A673 (cell line): ENCODE measurements at regions of chr3 and their contacts with region 1.

Region 1: GRCh38 chr3:170811928-170812591 is 57.9 kb downstream of the RPL22L1 start:
- DNase-seq: peak; percentile 86
- H3K4me3 ChIP-seq: no peak overlapping the region
- H3K27ac ChIP-seq: no peak overlapping the region
- H3K4me1 ChIP-seq: peaks cover 4% of the 10 kb centered on the region
- H3K27me3 ChIP-seq: no peaks in the 10 kb centered on the region
- CTCF ChIP-seq: peak; percentile 97

Region 2: GRCh38 chr3:169764452-169765274 is 1047.4 kb before region 1 on chr3 and contains the start of gene TERC:
- CTCF ChIA-PET with region 1: no interaction called
- POLR2A ChIA-PET with region 1: no interaction called
- intact Hi-C with region 1: loop called (anchors 10 kb)
- DNase-seq: peak; percentile 92
- H3K4me3 ChIP-seq: peak within 1 kb of the TSS; percentile 73
- H3K27ac ChIP-seq: peak within 1 kb of the TSS; percentile 90
- H3K4me1 ChIP-seq: no peaks in the 10 kb centered on the region
- H3K27me3 ChIP-seq: no peaks in the 10 kb centered on the region
- CTCF ChIP-seq: no peak
- total RNA-seq, gene TERC: 5.8 and 16.7 TPM in 2 replicates

Region 3: DNA sequence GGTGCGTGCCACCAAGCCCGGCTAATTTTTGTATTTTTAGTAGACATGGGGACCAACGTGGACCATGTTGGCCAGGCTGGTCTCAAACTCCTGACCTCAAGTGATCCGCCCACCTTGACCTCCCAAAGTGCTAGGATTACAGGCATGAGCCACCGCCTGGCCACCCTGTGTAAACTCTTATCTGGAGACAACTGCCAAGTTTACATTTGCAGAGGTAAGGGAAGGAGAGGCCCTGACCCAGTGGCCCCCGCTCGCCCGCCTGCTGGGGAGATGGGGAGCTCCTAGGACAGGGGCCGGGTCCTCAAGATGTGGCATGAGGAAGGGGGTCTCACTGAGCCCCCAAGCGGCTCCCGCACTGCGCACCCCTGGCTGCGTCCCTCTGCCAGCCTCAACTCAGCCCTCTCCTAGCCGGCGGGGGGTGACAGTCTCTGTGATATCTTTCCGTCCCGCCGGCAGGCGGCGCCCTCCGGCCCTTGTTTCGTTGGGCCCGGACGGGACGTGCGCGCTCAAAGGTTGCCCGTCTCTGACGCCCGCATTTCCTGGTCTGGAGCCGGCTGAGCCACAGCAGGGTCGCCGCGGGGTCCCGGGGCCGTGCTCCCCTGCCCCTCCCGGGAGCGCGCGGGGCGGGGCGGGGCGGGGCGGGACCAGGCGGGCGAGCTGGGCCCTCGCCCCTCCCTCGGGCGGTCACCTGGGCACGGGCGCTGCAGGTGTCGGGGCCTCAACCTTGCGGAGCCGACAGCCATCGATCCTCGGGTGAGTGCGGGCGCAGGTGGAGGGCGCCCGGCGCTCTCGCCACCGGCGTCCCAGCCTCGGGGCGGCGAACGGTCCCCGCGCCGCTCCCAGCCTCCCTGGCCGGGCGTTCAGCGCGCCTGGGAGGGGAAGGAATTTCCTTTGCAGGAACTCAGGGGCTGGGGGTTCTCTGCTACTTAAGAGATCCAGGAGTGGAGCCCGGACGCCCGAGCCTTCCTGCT is 774.3 kb before region 1 on chr3 and contains the start of gene GPR160:
- CTCF ChIA-PET with region 1: interaction called, 3 read pairs
- POLR2A ChIA-PET with region 1: no interaction called
- intact Hi-C with region 1: loop called (anchors 10 kb)
- DNase-seq: peak; percentile 84
- H3K4me3 ChIP-seq: peak within 1 kb of the TSS; percentile 79
- H3K27ac ChIP-seq: peak within 1 kb of the TSS; percentile 11
- H3K4me1 ChIP-seq: no peaks in the 10 kb centered on the region
- H3K27me3 ChIP-seq: no peaks in the 10 kb centered on the region
- CTCF ChIP-seq: peak; percentile 82
- total RNA-seq, gene GPR160: 6.7 and 11.2 TPM in 2 replicates

Region 4: DNA sequence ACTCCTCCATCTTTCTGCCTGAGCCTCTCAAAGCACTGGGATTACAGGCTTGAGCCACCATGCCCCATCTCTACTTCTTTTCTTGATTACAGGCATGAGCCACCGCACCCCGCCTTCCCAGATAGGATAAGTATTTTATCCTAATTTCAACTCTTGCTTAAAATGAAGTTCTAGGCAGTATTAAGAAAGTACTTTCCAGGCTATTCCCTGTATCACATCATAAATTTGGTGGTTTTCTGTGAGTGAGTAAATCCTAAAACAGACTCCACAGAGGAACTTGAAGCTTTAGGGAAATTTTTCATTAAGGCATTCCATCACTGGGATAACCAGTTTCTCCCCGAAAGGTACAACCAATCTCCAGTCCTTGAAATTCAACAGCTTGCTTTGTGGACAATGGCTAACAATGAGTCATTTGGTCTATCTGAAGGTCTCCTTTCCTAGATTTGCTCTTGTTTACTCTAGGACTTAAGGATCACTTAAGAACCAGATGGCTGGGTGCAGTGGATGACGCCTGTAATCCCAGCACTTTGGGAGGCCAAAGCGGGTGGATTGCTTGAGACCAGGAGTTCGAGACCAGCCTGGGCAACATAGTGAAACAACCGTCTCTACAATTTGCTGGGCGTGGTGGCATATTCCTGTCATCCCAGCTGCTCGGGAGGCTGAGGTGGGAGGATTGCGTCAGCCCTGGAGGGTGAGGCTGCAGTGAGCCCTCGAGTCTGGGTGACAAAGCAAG is 504.2 kb before region 1 on chr3:
- CTCF ChIA-PET with region 1: no interaction called
- POLR2A ChIA-PET with region 1: no interaction called
- intact Hi-C with region 1: loop called (anchors 5 kb)
- DNase-seq: no peak
- H3K4me3 ChIP-seq: no peak overlapping the region
- H3K27ac ChIP-seq: no peak overlapping the region
- H3K4me1 ChIP-seq: no peaks in the 10 kb centered on the region
- H3K27me3 ChIP-seq: no peaks in the 10 kb centered on the region
- CTCF ChIP-seq: no peak

Region 5: DNA sequence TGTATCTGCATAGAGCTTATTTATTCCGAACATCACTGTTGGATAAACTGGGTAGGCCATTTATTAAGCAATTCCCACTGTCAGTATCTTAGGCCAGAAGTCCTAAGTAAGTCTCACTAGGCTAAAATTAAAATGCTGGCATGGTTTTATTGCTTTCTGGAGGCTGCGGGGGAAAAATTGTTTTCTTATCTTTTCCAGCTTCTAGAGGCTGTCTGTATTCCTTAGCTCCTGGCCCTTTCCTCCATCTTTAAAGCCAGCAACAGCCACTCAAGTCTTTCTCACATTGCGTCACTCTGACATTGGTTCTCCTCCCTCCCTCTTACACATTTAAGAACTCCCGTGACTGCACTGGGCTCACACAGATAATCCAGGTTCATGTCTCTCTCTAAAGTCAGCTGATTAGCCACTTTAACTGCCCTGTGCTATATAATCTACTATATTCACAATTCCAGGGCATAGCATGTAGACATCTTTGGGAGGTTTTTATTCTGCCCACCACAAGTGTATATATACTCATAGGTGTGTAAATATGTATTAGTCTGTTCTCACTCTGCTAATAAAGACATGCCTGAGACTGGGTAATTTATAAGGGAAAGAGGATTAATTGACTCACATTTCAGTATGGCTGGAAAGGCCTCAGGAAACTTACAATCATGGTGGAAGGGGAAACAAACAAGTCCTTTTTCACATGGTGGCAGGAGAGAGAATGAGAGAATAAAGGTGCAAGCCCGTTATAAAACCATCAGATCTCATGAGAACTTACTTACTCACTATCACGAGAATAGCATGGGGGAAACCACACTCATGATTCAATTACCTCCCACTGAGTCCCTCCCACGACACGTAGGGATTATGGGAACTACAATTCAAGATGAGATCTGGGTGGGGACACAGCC is 112.7 kb before region 1 on chr3:
- CTCF ChIA-PET with region 1: interaction called, 4 read pairs
- POLR2A ChIA-PET with region 1: no interaction called
- intact Hi-C with region 1: loop called (anchors 5 kb)
- DNase-seq: no peak
- H3K4me3 ChIP-seq: no peak overlapping the region
- H3K27ac ChIP-seq: no peak overlapping the region
- H3K4me1 ChIP-seq: no peaks in the 10 kb centered on the region
- H3K27me3 ChIP-seq: no peaks in the 10 kb centered on the region
- CTCF ChIP-seq: no peak

Region 6: GRCh38 chr3:171129827-171130226 is 317.8 kb after region 1 on chr3:
- CTCF ChIA-PET with region 1: no interaction called
- POLR2A ChIA-PET with region 1: no interaction called
- intact Hi-C with region 1: no loop called
- DNase-seq: peak; percentile 12
- H3K4me3 ChIP-seq: no peak overlapping the region
- H3K27ac ChIP-seq: no peak overlapping the region
- H3K4me1 ChIP-seq: no peaks in the 10 kb centered on the region
- H3K27me3 ChIP-seq: no peaks in the 10 kb centered on the region
- CTCF ChIP-seq: no peak